Body of pancreas (tissue), 4 donors: ENCODE measurements at regions of chr9 and their contacts with region 1.

Region 1: DNA sequence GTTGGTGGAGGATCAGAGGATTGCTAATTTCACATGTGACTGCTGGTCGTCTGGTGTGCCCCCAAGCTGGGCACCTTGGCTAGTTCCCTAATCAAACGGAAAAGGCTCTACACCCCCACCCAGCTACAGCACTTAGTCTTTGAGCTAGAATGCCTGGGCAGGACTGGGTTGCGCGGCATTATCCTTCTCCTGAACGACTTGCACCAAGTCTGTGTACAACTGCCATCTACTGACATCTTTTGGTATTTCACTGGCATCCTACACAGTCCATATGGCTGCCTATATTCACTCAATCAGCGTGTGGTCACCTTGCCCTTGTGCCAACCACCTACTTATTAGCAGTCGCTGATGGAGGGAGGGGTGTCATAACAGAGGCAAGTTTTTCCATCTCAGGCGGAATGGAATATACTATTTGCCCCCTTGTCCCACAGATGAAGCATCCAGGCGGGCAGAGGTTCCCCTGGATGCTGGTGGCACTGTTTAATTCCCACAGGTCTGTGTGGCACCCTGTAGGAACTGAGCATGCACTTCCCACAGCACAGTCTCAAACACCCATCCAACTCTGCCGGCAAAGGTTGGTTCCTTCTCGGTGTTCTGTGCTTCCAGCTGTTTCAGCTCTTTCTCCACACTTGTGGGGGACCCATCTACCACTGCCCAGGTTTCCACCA is 150.1 kb downstream of the OSTF1 start:
- DNase-seq: peak; percentile 69 to 80 (median 74)
- ATAC-seq: peak; percentile 92
- H3K4me3 ChIP-seq: no peak overlapping the region
- H3K27ac ChIP-seq: no peak overlapping the region
- H3K4me1 ChIP-seq: peaks cover 10% of the 10 kb centered on the region
- H3K27me3 ChIP-seq: no peaks in the 10 kb centered on the region
- CTCF ChIP-seq: peak; percentile 47 to 94 (median 90)
- POLR2A ChIP-seq: no peak

Region 2: DNA sequence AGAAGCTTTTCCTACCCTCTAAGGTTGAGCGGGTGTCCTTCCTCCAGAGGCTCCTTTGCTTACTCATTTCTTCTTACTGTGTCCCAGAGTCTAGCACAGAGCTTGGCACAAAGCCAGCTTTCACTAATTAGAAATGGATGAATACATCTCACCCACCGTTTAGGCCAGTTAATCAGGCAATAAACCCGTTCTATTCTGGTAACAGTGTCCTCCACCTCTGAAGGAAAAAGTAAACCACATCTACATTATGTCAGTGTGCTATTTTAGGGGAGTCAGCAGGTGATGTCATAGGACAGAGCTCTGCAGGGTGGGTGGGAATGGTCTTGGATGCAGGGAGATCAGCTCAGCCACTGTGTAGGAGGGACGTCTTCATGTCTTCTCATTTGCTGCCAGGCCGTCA is 40.9 kb before region 1 on chr9:
- intact Hi-C with region 1: loop called (anchors 5 kb)
- DNase-seq: no peak
- ATAC-seq: no peak
- H3K4me3 ChIP-seq: no peak overlapping the region
- H3K27ac ChIP-seq: no peak overlapping the region
- H3K4me1 ChIP-seq: no peaks in the 10 kb centered on the region
- H3K27me3 ChIP-seq: no peaks in the 10 kb centered on the region
- CTCF ChIP-seq: no peak
- POLR2A ChIP-seq: no peak

Region 3: DNA sequence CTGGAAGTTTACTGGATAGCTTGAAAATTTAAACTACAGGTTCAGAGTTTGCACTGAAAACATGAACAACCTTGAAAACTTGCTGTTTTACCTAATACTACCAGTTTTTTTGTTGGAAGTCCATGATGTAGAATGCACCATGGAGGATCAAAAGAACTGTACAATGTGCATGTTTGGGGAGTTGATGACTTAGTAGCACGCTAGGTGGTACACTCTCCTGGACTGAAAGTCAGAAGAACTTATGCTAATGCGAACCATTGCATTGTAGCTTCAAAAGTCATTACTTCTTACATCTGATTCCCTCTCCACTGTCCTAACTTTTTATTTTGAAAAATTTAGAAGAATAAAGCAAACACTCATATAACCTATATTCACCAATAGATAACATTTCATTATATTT is 60.9 kb after region 1 on chr9:
- intact Hi-C with region 1: loop called (anchors 10 kb)
- DNase-seq: no peak
- ATAC-seq: no peak
- H3K4me3 ChIP-seq: no peak overlapping the region
- H3K27ac ChIP-seq: no peak overlapping the region
- H3K4me1 ChIP-seq: no peaks in the 10 kb centered on the region
- H3K27me3 ChIP-seq: no peaks in the 10 kb centered on the region
- CTCF ChIP-seq: no peak
- POLR2A ChIP-seq: no peak

Region 4: GRCh38 chr9:75504721-75505120 is 266.3 kb after region 1 on chr9:
- intact Hi-C with region 1: no loop called
- DNase-seq: peak in 1 of 4 donors; percentile 27
- ATAC-seq: no peak
- H3K4me3 ChIP-seq: no peak overlapping the region
- H3K27ac ChIP-seq: no peak overlapping the region
- H3K4me1 ChIP-seq: no peaks in the 10 kb centered on the region
- H3K27me3 ChIP-seq: no peaks in the 10 kb centered on the region
- CTCF ChIP-seq: no peak
- POLR2A ChIP-seq: no peak